Right cardiac atrium (tissue), 5 donors: ENCODE measurements at regions of chr1 and their contacts with region 1.

Region 1: DNA sequence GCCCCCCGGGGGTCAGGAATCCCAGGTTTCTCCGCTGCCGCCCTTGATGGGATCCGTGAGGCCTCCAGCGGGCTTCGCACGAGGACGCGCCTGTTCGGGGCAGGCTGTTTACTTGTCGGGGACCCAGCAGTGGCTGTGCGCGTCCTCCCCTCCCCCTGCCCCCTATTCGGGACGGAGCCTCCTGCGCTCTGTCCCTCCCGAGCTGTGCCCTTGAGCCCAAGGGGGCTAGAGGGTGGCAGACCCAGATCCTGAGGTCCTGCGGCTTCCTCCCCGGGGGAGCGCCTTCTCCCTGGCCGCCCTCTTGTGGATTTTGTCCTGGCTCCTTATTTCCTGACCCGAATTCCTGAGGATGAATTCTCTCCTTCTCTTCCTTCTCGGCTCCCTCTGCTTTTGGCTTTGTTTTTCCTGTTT is 38.4 kb downstream of the PIK3CD start:
- DNase-seq: peak; percentile 49 to 77 (median 74)
- ATAC-seq: peak in 1 of 2 donors; percentile 34
- H3K4me3 ChIP-seq: peak overlapping the region; percentile 94
- H3K27ac ChIP-seq: no peak overlapping the region
- H3K4me1 ChIP-seq: peaks cover 4% of the 10 kb centered on the region
- H3K27me3 ChIP-seq: no peaks in the 10 kb centered on the region

Region 2: GRCh38 chr1:9494929-9495758 is 194.8 kb before region 1 on chr1:
- intact Hi-C with region 1: no loop called
- DNase-seq: peak; percentile 55 to 86 (median 83)
- ATAC-seq: peak; percentile 68 to 75
- H3K4me3 ChIP-seq: no peak overlapping the region
- H3K27ac ChIP-seq: no peak overlapping the region
- H3K4me1 ChIP-seq: no peaks in the 10 kb centered on the region
- H3K27me3 ChIP-seq: no peaks in the 10 kb centered on the region

Region 3: DNA sequence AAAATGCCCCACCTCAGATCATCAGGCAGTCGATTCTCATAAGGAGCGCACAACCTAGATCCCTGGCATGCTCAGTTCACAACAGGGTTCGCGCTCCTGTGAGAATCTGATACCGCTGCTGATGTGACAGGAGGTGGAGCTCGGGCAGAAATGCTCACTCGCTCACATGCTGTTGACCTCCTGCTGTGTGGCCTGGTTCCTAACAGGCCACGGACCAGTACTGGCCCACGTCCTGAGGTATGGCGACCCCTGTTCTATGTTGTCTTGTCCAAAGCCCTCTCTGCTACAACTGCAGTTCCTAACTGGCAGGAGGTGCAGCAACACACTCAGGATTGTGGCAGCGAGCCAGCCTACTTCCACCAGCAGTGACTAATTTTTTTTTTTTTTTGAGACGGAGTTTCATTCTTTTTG is 63.1 kb after region 1 on chr1:
- intact Hi-C with region 1: loop called in 1 of 4 experiments (anchors 10 kb)
- DNase-seq: peak; percentile 73 to 82 (median 78)
- ATAC-seq: peak; percentile 34 to 41
- H3K4me3 ChIP-seq: no peak overlapping the region
- H3K27ac ChIP-seq: no peak overlapping the region
- H3K4me1 ChIP-seq: peaks cover 2% of the 10 kb centered on the region
- H3K27me3 ChIP-seq: no peaks in the 10 kb centered on the region